Activated B cell treated with CpG ODN at 0.5 μM for 24 hours (primary cell): ENCODE measurements at regions of chr5 and their contacts with region 1.

Region 1: DNA sequence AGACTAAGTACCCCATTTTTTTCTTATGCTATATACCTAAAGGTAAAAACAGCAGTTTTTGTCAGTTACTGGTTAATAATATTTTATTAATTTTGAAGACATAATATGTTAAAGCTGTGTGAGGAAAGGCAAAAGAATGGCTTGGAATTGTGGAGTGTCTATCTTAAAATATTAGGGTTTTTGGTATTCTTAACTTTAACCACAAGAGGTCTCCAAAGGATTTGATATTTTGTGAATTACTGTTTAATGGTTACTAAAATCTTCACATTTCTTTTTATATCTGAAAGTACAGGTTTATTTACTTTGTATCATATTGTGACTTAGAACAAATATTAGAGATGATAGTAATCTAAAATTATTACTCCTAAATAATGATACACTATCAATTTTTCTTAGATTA is 32.0 kb upstream of the DHFR start:
- DNase-seq: no peak
- ATAC-seq: no peak
- H3K4me3 Mint-ChIP-seq: no peak overlapping the region
- H3K27ac Mint-ChIP-seq: no peak overlapping the region
- H3K4me1 Mint-ChIP-seq: peaks cover 4% of the 10 kb centered on the region
- H3K27me3 Mint-ChIP-seq: no peaks in the 10 kb centered on the region
- CTCF ChIP-seq: no peak

Region 2: DNA sequence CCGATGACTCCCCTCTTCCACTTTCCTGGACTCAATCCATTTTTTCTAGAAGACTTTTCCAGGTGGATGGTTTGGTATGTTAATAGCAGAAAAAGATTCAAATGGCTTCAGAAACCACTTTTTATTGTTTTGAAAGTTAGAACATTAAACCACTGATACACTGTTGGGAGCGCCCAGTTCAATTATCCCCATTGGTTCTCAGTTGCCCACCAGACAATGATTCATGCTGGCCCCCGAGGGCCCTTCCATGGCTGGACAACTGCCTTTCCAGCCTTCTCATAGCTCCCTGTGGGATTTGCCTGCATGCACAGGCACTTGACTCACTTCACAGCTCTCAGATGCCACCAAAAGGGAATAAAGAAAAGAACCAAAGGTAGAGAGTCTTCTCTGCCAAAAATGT is 95.4 kb before region 1 on chr5:
- CTCF ChIA-PET with region 1: no interaction called
- POLR2A ChIA-PET with region 1: no interaction called
- intact Hi-C with region 1: no loop called
- DNase-seq: no peak
- ATAC-seq: no peak
- H3K4me3 Mint-ChIP-seq: no peak overlapping the region
- H3K27ac Mint-ChIP-seq: no peak overlapping the region
- H3K4me1 Mint-ChIP-seq: no peaks in the 10 kb centered on the region
- H3K27me3 Mint-ChIP-seq: peaks cover 4% of the 10 kb centered on the region
- CTCF ChIP-seq: no peak

Region 3: DNA sequence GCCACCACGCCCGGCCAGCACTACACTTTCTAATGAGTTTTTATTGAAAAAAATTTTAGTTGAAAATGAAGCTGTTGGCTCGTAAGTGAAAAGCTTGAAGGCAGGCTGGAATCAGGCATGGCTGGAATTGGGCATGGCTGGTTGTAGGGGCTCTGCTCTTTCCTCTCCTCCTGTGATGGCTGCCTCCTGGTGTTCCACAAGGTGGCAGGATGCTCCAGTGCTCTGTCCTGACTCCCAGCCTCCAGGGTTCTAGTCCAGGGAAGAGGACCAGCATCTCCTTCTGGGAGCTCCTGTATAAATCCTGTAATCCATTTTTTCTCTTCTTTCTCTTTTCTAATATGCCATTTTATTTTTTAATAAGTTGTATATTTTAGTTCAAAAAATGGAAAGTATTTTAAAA is 25.2 kb after region 1 on chr5:
- CTCF ChIA-PET with region 1: no interaction called
- POLR2A ChIA-PET with region 1: no interaction called
- intact Hi-C with region 1: no loop called
- DNase-seq: no peak
- ATAC-seq: no peak
- H3K4me3 Mint-ChIP-seq: no peak overlapping the region
- H3K27ac Mint-ChIP-seq: no peak overlapping the region
- H3K4me1 Mint-ChIP-seq: no peaks in the 10 kb centered on the region
- H3K27me3 Mint-ChIP-seq: no peaks in the 10 kb centered on the region
- CTCF ChIP-seq: no peak

Region 4: GRCh38 chr5:81105261-81105877 is 418.6 kb after region 1 on chr5:
- CTCF ChIA-PET with region 1: interaction called, 9 read pairs
- POLR2A ChIA-PET with region 1: no interaction called
- intact Hi-C with region 1: loop called (anchors 1 kb)
- DNase-seq: no peak
- ATAC-seq: no peak
- H3K4me3 Mint-ChIP-seq: no peak overlapping the region
- H3K27ac Mint-ChIP-seq: no peak overlapping the region
- H3K4me1 Mint-ChIP-seq: no peaks in the 10 kb centered on the region
- H3K27me3 Mint-ChIP-seq: peaks cover 5% of the 10 kb centered on the region
- CTCF ChIP-seq: no peak

Region 5: DNA sequence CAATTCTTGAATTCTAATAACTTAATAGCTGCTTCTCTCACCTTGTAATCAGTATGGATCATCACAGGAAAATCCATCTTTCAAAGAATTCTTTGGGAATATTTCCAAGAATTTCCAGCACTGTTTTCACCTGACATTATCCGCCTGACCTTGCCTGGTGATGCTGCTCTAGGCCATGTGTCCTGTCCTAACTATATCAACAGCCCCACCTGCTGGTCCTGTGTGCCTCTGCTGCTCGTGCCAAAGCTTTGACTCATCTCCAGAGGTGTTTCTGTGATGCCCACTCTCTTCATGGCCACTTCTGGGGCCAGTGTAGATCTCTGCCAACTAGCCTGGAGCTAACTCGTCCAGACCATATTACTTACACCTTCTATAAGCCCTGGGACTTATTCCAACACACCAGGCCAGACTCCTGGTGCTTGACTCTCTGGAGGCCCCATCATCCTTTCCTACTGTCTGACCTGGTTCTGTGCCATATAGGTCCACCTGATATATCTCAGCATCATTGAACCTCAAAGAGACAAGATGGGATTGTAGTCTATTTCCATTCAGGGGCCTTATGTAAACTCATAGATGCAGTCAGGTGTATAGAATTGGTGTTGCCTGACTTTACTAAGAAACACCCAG is 478.8 kb after region 1 on chr5:
- CTCF ChIA-PET with region 1: no interaction called
- POLR2A ChIA-PET with region 1: no interaction called
- intact Hi-C with region 1: loop called (anchors 1 kb)
- DNase-seq: no peak
- ATAC-seq: no peak
- H3K4me3 Mint-ChIP-seq: no peak overlapping the region
- H3K27ac Mint-ChIP-seq: no peak overlapping the region
- H3K4me1 Mint-ChIP-seq: no peaks in the 10 kb centered on the region
- H3K27me3 Mint-ChIP-seq: peaks cover 6% of the 10 kb centered on the region
- CTCF ChIP-seq: no peak

Region 6: DNA sequence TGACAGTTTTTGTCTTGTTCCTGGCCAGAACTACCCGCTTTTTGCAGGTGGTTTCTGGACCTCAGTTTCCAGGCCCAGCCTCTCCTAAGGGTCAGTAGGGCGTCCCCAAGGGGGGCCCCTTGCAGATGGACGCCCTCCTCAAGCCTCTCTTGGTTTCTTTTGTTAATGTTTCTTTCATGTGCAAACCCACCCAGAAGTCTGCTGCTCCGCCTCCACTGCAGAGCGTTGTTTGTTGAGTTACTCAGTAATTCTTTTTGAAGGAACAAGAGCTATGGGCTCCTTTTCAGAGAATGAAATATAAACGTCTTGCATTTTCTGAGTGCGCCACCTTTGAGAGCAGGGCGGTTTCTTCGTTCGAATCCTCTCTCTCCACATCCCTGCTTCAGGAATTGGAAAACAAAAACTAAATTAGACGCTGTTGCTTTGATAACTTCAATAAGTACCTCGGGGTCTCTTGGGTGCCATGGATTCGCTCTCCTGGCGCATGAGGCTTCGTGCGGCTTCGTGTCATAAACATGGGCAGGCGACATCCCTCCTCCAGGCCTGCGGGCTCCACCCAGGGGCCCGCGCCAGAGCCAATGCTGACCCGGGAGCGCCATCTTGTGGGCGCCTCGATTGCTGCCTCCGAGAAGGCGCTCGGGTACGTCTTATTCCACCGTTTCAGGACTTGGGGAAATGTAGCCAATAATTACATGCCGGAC is 508.0 kb after region 1 on chr5:
- CTCF ChIA-PET with region 1: interaction called, 4 read pairs
- POLR2A ChIA-PET with region 1: no interaction called
- intact Hi-C with region 1: loop called (anchors 1 kb)
- DNase-seq: peak; percentile 63
- ATAC-seq: peak; percentile 88
- H3K4me3 Mint-ChIP-seq: no peak overlapping the region
- H3K27ac Mint-ChIP-seq: no peak overlapping the region
- H3K4me1 Mint-ChIP-seq: peaks cover 5% of the 10 kb centered on the region
- H3K27me3 Mint-ChIP-seq: peaks cover 12% of the 10 kb centered on the region
- CTCF ChIP-seq: no peak